PC-3 (cell line): ENCODE measurements at regions of chr13 and their contacts with region 1.

Region 1: DNA sequence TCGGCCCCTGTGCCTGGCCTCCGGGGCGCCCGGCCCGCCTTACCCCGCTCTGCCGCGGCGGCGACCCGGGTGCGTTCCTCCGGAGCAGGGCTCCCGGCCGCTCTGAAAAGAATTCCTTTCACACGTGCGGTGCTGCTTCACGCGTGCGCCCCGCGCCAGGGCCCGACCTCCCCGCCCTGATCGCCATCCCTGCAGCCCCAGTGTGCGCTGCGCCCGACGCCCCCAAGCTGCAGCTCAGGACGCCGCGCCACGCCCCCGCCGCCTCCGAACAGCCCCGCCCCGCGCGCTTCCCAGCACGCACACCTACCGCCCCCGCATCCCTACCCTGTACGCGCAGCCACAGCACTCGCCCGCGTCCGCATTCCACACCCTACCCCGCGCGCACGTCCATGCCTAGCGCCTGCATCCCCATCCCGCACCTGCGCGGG is at the start of gene GJA3:
- DNase-seq: peak; percentile 8
- ATAC-seq: peak; percentile 21
- H3K4me3 ChIP-seq: peak within 1 kb of the TSS; percentile 80
- H3K27ac ChIP-seq: no peak within 1 kb of the TSS
- H3K4me1 ChIP-seq: peaks cover 19% of the 10 kb centered on the region
- H3K27me3 ChIP-seq: peaks cover 7% of the 10 kb centered on the region; the same call in 1 of the 2 replicates
- CTCF ChIP-seq: no peak
- total RNA-seq, gene GJA3: 0.55 and 1.2 TPM in 2 replicates

Region 2: DNA sequence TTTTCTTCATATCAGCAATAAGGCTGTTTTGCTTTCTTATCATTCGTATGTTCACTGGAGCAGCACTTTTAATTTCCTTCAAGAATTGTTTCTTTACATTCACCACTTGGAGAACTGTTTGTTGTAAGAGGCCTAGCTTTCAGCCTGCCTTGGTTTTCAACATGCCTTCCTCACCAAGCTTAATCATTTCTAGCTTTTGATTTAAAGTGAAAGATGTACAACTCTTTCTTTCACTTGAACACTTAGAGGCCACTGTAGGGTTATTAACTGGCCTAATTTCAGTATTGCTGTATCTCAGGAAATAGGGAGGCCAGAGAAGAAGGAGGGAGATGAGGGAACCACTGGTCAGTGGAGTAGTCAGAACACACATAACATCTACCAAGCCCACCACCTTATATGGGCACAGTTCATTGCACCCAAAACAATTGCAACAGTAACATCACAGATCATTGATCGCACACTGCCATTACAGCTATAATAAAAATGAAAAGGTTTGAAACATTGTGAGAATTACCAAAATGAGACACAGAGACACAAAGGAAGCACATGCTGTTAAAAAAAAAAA is 797.8 kb before region 1 on chr13:
- CTCF ChIA-PET with region 1: no interaction called
- POLR2A ChIA-PET with region 1: no interaction called
- intact Hi-C with region 1: no loop called
- DNase-seq: no peak
- ATAC-seq: no peak
- H3K4me3 ChIP-seq: no peak overlapping the region
- H3K27ac ChIP-seq: no peak overlapping the region
- H3K4me1 ChIP-seq: no peaks in the 10 kb centered on the region
- H3K27me3 ChIP-seq: peaks cover 28% of the 10 kb centered on the region; the same call in 1 of the 2 replicates
- CTCF ChIP-seq: no peak

Region 3: DNA sequence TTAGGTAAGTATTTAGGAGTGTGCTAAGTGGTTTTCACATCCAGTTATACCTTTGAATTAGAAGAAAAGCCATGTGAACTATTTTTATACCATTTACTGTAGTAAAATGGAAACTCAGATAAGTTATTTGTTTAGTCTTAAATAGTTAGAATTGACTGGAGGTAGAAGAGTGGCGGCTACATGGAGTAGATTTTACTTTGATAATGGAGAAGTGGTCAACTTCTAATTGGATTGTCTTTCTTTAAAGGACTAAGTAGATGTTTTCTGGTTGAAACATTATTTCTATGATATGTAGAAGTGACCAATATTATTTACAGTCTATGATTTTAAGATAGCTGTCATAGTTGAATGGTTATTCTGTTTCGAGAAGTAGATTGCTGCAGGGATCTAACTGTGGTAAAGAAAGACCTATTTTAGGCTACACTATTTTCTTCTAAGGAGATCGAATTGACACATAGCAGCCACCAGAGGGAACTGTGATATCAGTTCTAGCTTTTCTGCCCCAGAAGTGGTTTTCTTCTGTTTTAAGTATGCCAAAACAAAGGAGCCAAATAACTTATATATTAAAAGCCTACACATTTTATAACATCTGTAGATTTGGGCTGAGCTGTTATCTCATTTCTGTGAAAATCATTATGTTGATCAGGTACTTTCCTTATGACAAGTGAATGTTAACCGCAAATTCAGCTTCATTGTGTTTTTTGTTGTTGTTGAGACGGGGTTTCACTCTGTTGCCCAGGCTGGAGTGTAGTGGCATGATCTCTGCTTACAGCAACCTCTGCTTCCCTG is 176.2 kb before region 1 on chr13:
- CTCF ChIA-PET with region 1: no interaction called
- POLR2A ChIA-PET with region 1: no interaction called
- intact Hi-C with region 1: loop called (anchors 5 kb)
- DNase-seq: peak; percentile 55
- ATAC-seq: peak; percentile 57
- H3K4me3 ChIP-seq: no peak overlapping the region
- H3K27ac ChIP-seq: no peak overlapping the region
- H3K4me1 ChIP-seq: no peaks in the 10 kb centered on the region
- H3K27me3 ChIP-seq: no peaks in the 10 kb centered on the region
- CTCF ChIP-seq: peak; percentile 81

Region 4: DNA sequence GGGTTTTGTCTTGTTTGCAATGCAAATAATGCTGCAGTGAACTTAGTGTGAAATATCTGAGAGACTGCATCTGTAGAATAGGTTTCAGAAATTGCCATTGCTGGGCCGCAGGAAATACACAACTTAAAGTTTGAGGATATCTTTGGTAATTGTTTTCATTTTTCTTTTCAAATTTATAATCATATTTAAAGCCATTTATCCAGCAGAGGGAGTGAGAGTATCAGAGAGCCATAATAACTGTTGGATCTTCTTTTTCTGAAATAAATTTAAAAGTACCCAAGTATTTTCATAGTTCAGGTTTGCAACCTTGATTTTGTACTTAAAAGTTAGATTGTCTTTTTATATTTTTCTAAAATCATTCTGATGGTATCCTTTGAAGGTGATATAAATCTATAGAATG is 102.9 kb before region 1 on chr13:
- CTCF ChIA-PET with region 1: no interaction called
- POLR2A ChIA-PET with region 1: no interaction called
- intact Hi-C with region 1: loop called (anchors 2 kb)
- DNase-seq: peak; percentile 7
- ATAC-seq: no peak
- H3K4me3 ChIP-seq: no peak overlapping the region
- H3K27ac ChIP-seq: no peak overlapping the region
- H3K4me1 ChIP-seq: no peaks in the 10 kb centered on the region
- H3K27me3 ChIP-seq: no peaks in the 10 kb centered on the region
- CTCF ChIP-seq: peak; percentile 44; the same call in 1 of the 2 replicates

Region 5: DNA sequence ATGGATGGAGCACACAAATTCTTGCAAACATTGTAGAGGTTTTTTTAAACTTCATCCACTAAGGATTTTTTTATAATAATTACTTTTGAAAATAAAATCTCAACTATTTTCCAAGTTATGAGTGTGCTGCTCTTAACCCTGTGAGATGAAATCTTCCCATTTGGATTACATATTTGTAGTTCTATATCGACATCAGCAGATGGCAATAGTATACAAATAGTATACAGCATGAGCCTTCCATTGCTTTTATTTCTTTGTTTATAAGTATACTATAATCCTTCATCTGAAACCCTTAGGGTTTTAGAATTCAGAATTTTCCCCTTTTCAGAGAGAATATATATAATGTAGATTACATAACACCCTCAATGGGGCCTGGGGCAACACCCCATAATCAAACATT is 70.5 kb before region 1 on chr13:
- CTCF ChIA-PET with region 1: no interaction called
- POLR2A ChIA-PET with region 1: no interaction called
- intact Hi-C with region 1: loop called (anchors 1 kb)
- DNase-seq: peak; percentile 43
- ATAC-seq: peak; percentile 71
- H3K4me3 ChIP-seq: no peak overlapping the region
- H3K27ac ChIP-seq: no peak overlapping the region
- H3K4me1 ChIP-seq: no peaks in the 10 kb centered on the region
- H3K27me3 ChIP-seq: no peaks in the 10 kb centered on the region
- CTCF ChIP-seq: peak; percentile 62; the same call in 1 of the 2 replicates

Region 6: DNA sequence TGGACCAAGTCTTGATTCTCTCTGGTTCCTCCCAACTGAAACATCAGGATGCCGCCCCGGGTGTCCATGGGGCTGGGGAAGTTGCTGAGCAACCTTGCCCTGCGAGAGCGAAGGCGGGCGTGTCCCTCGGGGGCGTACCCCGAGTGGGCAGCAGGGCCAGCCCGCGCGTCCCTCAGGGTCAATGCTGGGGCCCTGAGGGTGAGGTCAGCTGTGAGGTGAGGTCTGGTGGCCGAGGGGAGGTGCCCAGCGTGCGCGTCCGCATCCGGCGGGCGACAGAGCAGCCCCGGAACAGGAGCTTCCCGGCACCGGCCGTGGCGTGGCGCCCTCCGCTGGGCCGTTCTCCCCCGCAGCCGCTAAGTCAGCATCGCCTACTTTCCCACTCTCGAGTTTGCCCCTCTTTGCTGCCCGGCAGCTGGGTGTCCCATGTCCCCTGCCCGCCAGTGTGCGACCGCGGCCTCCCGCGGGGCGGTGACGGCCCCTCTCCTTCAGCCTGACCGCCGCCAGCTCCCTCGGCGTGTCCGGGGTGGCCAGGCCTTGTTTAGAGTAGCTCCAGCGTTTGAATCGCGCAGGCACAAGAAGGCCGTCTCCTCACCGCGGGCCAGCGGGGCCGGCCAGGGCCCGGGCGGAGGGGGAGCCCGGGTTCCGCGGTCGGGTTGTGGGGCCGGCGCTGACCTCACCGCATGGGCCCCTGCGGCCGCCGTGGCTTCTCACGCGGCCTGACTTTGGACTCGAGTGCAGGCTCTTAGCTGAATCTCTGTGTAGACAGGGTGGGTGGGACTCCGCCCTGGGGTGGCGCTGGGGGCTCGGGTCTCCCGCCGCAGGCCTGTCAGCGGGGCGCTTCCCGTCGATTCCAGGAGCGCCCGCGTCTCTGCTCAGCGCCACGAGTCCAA is 33.0 kb before region 1 on chr13:
- CTCF ChIA-PET with region 1: interaction called, 4 read pairs
- POLR2A ChIA-PET with region 1: interaction called, 3 read pairs
- intact Hi-C with region 1: loop called (anchors 1 kb)
- DNase-seq: peak; percentile 66
- ATAC-seq: peak; percentile 78
- H3K4me3 ChIP-seq: peak overlapping the region; percentile 77
- H3K27ac ChIP-seq: peak overlapping the region; percentile 60
- H3K4me1 ChIP-seq: peaks cover 17% of the 10 kb centered on the region
- H3K27me3 ChIP-seq: no peaks in the 10 kb centered on the region
- CTCF ChIP-seq: peak; percentile 72

Region 7: GRCh38 chr13:20401931-20402856 is 241.3 kb after region 1 on chr13:
- CTCF ChIA-PET with region 1: no interaction called
- POLR2A ChIA-PET with region 1: no interaction called
- intact Hi-C with region 1: no loop called
- DNase-seq: peak; percentile 91
- ATAC-seq: peak; percentile 91
- H3K4me3 ChIP-seq: no peak overlapping the region
- H3K27ac ChIP-seq: peak overlapping the region; percentile 83
- H3K4me1 ChIP-seq: peaks cover 31% of the 10 kb centered on the region
- H3K27me3 ChIP-seq: no peaks in the 10 kb centered on the region
- CTCF ChIP-seq: no peak

Region 8: GRCh38 chr13:20814224-20814910 is 653.5 kb after region 1 on chr13:
- CTCF ChIA-PET with region 1: no interaction called
- POLR2A ChIA-PET with region 1: no interaction called
- intact Hi-C with region 1: loop called (anchors 5 kb)
- DNase-seq: peak; percentile 82
- ATAC-seq: peak; percentile 81
- H3K4me3 ChIP-seq: peak overlapping the region; percentile 8; the same call in 1 of the 2 replicates
- H3K27ac ChIP-seq: peak overlapping the region; percentile 25
- H3K4me1 ChIP-seq: peaks cover 26% of the 10 kb centered on the region
- H3K27me3 ChIP-seq: no peaks in the 10 kb centered on the region
- CTCF ChIP-seq: no peak